ENCODE measurements at regions of chr2 and their contacts with region 1.

Region 1: DNA sequence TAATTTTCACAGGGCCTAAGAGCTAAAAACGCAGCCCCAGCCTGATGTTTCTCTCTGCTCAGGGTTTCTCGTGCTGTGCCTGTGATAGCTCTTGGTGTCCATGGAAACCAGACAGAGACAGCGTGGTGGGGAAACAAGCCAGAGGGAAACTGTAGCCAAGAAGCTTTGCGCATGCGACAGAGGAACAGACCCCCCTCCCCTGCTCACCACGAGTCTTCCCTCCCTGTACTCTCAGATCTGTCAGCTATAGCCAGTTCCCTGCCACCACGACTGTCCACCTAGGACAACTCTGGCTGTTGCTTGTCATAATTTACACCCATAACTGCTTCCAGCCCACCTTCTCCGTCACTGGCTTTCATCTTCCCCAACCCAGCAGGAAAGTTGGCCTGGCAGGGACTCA is 13.2 kb upstream of the DNAJC27 start:
- DNase-seq: peak; percentile 18
- H3K4me3 ChIP-seq: no peak overlapping the region
- H3K27ac ChIP-seq: peak overlapping the region in 3 of 4 donors; percentile 26 to 60 (median 59)
- H3K4me1 ChIP-seq: peaks cover 0 to 16% (median 7%) of the 10 kb centered on the region in 4 donors
- H3K27me3 ChIP-seq: no peaks in the 10 kb centered on the region
- CTCF ChIP-seq: no peak
- EP300 ChIP-seq: no peak
- POLR2A ChIP-seq: no peak

Region 2: GRCh38 chr2:24792874-24793760 is 191.8 kb before region 1 on chr2 and contains the starts of genes CENPO and PTRHD1:
- in situ Hi-C with region 1: no loop called
- intact Hi-C with region 1: no loop called
- DNase-seq: peak; percentile 97
- H3K4me3 ChIP-seq: peak within 1 kb of the TSS; percentile 57 to 90 (median 72)
- H3K27ac ChIP-seq: peak within 1 kb of the TSS; percentile 94 to 99 (median 95)
- H3K4me1 ChIP-seq: peaks cover 9 to 20% (median 14%) of the 10 kb centered on the region in 4 donors
- H3K27me3 ChIP-seq: no peaks in the 10 kb centered on the region
- CTCF ChIP-seq: peak; percentile 55 to 90 (median 72)
- EP300 ChIP-seq: no peak
- POLR2A ChIP-seq: peak; percentile 61
- total RNA-seq, gene CENPO: 6.0 to 13.8 (median 9.6) TPM
- total RNA-seq, gene PTRHD1: 30.6 to 50.9 (median 40.5) TPM

Region 3: DNA sequence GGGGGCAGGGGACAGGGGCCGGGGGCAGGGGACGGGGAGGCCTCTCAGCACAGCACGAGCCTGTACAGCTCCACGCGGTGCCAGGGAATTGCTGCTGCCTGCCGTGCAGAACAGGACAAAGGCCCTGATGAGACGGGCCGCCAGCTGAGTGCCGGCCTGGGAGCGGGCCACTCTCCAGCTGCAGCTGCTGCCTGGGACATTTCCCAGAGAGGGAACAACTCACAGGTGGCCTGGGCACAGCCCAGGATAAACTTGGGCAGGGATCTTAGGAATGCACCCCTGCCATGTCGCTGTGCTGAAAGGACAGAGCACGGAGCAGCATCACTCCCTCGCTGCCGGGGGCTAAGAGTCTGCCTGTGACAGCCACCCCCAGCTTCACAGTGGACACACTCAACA is 152.8 kb before region 1 on chr2:
- in situ Hi-C with region 1: no loop called
- intact Hi-C with region 1: no loop called
- DNase-seq: no peak
- H3K4me3 ChIP-seq: no peak overlapping the region
- H3K27ac ChIP-seq: no peak overlapping the region
- H3K4me1 ChIP-seq: peaks cover 3 to 5% (median 5%) of the 10 kb centered on the region in 4 donors
- H3K27me3 ChIP-seq: no peaks in the 10 kb centered on the region
- CTCF ChIP-seq: no peak
- EP300 ChIP-seq: no peak
- POLR2A ChIP-seq: no peak

Region 4: DNA sequence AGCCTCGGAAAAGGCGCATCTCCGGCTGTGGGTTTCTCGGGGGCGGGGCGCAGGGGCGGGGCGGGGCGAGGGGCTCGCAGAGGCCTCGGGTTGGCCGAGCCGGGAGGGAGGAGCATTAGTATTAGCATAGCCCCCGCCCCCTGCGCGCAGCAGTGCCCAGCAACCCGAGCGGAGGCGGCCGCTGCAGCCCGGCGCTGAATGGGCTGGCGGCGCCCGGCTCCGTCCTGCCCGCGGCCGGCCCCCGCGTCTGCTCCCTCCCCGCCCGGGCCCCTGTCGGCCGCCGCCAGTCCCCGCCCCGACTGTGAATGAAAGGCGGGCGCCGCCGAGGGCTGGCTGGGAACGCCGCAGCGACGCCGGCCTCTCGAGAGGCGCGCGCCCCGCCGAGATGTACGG is 57.0 kb after region 1 on chr2 and contains the start of gene EFR3B:
- in situ Hi-C with region 1: no loop called
- intact Hi-C with region 1: loop called (anchors 5 kb)
- DNase-seq: peak; percentile 96
- H3K4me3 ChIP-seq: peak within 1 kb of the TSS; percentile 30 to 69 (median 65)
- H3K27ac ChIP-seq: peak within 1 kb of the TSS; percentile 74 to 87 (median 86)
- H3K4me1 ChIP-seq: peaks cover 6 to 22% (median 17%) of the 10 kb centered on the region in 4 donors
- H3K27me3 ChIP-seq: peaks cover 10% of the 10 kb centered on the region
- CTCF ChIP-seq: no peak
- EP300 ChIP-seq: no peak
- POLR2A ChIP-seq: no peak
- total RNA-seq, gene EFR3B: under 0.01 to 1.4 (median 0.70) TPM

Measured in transverse colon (tissue), 4 donors.